ENCODE measurements at regions of chr15 and their contacts with region 1.

Region 1: DNA sequence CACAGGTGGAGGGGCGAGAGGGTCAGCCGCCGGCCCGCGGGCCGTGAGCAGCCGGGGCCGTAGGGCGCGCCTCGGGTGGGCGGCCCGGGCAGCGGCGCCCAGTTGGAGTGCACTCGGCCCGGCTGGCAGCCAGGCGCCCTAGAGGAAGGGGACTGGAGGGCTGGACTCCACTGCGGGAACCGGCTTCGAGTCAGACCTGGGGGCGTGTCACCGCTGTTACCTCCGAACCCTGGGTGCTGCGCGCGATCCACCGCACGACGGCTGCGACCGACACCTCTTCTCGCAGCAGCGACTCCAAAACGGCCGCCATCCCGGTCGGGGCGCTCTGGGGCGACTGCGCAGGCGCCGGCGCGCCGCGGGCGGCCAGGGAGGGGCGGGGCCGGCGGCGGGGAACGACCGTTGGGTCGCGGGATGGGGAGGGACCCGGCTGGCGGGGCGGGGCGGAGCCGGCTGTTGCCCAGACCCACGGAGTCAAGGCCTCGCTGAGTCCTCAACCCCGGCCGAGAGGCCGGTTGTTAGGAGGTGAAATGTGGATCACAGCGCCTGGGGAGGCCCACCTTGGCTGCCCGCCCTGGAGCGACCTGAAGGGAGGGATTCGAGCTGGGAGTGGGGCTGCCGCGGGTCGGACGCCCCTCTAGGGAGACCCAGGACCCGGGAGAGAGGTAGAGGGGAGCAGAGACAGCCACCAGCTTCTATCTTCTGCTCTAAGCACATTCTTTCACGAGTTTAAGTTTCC is at the start of gene CDAN1:
- DNase-seq: peak; percentile 29 to 95
- H3K4me3 ChIP-seq: peak within 1 kb of the TSS; percentile 79 to 84 (median 81)
- H3K27ac ChIP-seq: no peak within 1 kb of the TSS
- H3K4me1 ChIP-seq: peaks cover 0 to 7% (median 1%) of the 10 kb centered on the region in 4 experiments; a peak in 4 of 7 replicates
- H3K27me3 ChIP-seq: peaks cover 0 to 3% (median 1%) of the 10 kb centered on the region in 4 experiments; a peak in 2 of 7 replicates
- CTCF ChIP-seq: no peak
- EP300 ChIP-seq: no peak
- POLR2A ChIP-seq: peak; percentile 29 to 55
- RAD21 ChIP-seq: no peak
- total RNA-seq, gene CDAN1: 15.0 and 18.6 TPM in 2 replicates

Region 2: GRCh38 chr15:42344763-42345162 is 392.2 kb before region 1 on chr15:
- CTCF ChIA-PET with region 1: no interaction called
- POLR2A ChIA-PET with region 1: no interaction called
- DNase-seq: no peak
- H3K4me3 ChIP-seq: no peak overlapping the region
- H3K27ac ChIP-seq: no peak overlapping the region
- H3K4me1 ChIP-seq: no peaks in the 10 kb centered on the region
- H3K27me3 ChIP-seq: no peaks in the 10 kb centered on the region
- CTCF ChIP-seq: no peak
- EP300 ChIP-seq: no peak
- POLR2A ChIP-seq: no peak
- RAD21 ChIP-seq: no peak

Region 3: GRCh38 chr15:42528970-42529369 is 208.0 kb before region 1 on chr15:
- CTCF ChIA-PET with region 1: no interaction called
- POLR2A ChIA-PET with region 1: no interaction called
- DNase-seq: no peak
- H3K4me3 ChIP-seq: no peak overlapping the region
- H3K27ac ChIP-seq: no peak overlapping the region
- H3K4me1 ChIP-seq: no peaks in the 10 kb centered on the region
- H3K27me3 ChIP-seq: no peaks in the 10 kb centered on the region
- CTCF ChIP-seq: no peak
- EP300 ChIP-seq: no peak
- POLR2A ChIP-seq: no peak
- RAD21 ChIP-seq: no peak

Region 4: GRCh38 chr15:42723054-42723453 is 13.9 kb before region 1 on chr15:
- CTCF ChIA-PET with region 1: interaction called, 13 read pairs
- POLR2A ChIA-PET with region 1: interaction called, 27 read pairs
- DNase-seq: no peak
- H3K4me3 ChIP-seq: no peak overlapping the region
- H3K27ac ChIP-seq: no peak overlapping the region
- H3K4me1 ChIP-seq: no peaks in the 10 kb centered on the region
- H3K27me3 ChIP-seq: no peaks in the 10 kb centered on the region
- CTCF ChIP-seq: peak in 2 of 3 experiments; percentile 15 to 24; a peak in 2 of 4 replicates
- EP300 ChIP-seq: no peak
- POLR2A ChIP-seq: no peak
- RAD21 ChIP-seq: peak; percentile 22 to 25

Region 5: DNA sequence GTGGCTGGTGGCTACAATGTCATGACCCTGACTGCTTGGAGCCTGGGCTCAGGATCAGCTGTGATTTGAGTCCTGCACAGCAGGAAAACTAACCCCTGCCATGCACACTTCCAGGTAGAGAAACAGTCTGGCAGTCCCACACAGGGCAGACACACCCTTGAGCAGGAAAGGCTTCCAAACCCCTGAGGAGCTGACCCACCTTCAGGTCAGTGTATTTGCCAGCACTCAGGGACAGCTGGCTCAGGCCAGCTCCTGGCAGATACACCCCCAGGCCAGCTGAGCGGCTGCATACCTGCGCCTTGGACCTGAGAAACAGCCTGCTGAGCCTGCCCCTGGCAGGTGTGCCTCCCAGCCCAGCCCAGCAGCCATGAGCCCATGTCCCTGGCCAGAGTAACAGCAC is 22.1 kb after region 1 on chr15:
- CTCF ChIA-PET with region 1: interaction called, 12 read pairs
- POLR2A ChIA-PET with region 1: interaction called, 3 read pairs
- DNase-seq: no peak
- H3K4me3 ChIP-seq: no peak overlapping the region; a peak in 1 of 8 replicates
- H3K27ac ChIP-seq: no peak overlapping the region
- H3K4me1 ChIP-seq: peaks cover 0 to 4% (median under 1%) of the 10 kb centered on the region in 4 experiments; a peak in 6 of 7 replicates
- H3K27me3 ChIP-seq: no peaks in the 10 kb centered on the region
- CTCF ChIP-seq: no peak
- EP300 ChIP-seq: no peak
- POLR2A ChIP-seq: no peak
- RAD21 ChIP-seq: no peak

Region 6: GRCh38 chr15:42920519-42921227 is 183.7 kb after region 1 on chr15 and contains the start of gene TTBK2:
- CTCF ChIA-PET with region 1: interaction called, 28 read pairs
- POLR2A ChIA-PET with region 1: no interaction called
- DNase-seq: peak; percentile 97 to 98
- H3K4me3 ChIP-seq: peak within 1 kb of the TSS; percentile 90 to 96 (median 94)
- H3K27ac ChIP-seq: no peak within 1 kb of the TSS
- H3K4me1 ChIP-seq: peaks cover 0 to 6% (median 0%) of the 10 kb centered on the region in 4 experiments; a peak in 2 of 7 replicates
- H3K27me3 ChIP-seq: peaks cover 0 to 5% (median 2%) of the 10 kb centered on the region in 4 experiments; a peak in 2 of 7 replicates
- CTCF ChIP-seq: no peak
- EP300 ChIP-seq: no peak
- POLR2A ChIP-seq: peak in 1 of 2 experiments; percentile 62; a peak in 1 of 3 replicates
- RAD21 ChIP-seq: no peak
- total RNA-seq, gene TTBK2: 13.1 and 18.2 TPM in 2 replicates